ENCODE measurements at regions of chr5 and their contacts with region 1.

Region 1: GRCh38 chr5:80083101-80083890 is 48.1 kb downstream of the THBS4 start:
- DNase-seq: peak; percentile 71
- ATAC-seq: peak; percentile 73
- H3K4me3 ChIP-seq: peak overlapping the region in 4 of 5 experiments; percentile 7 to 43 (median 28)
- H3K4me3 Mint-ChIP-seq: peak overlapping the region; percentile 60
- H3K27ac ChIP-seq: no peak overlapping the region
- H3K27ac Mint-ChIP-seq: no peak overlapping the region
- H3K4me1 ChIP-seq: peaks cover 3 to 11% of the 10 kb centered on the region in 2 donors
- H3K4me1 Mint-ChIP-seq: peaks cover 9% of the 10 kb centered on the region
- H3K27me3 ChIP-seq: no peaks in the 10 kb centered on the region
- H3K27me3 Mint-ChIP-seq: no peaks in the 10 kb centered on the region
- CTCF ChIP-seq: peak; percentile 79

Region 2: GRCh38 chr5:79573983-79574890 is 509.1 kb before region 1 on chr5:
- CTCF ChIA-PET with region 1: no interaction called
- POLR2A ChIA-PET with region 1: no interaction called
- intact Hi-C with region 1: no loop called
- DNase-seq: no peak
- ATAC-seq: no peak
- H3K4me3 ChIP-seq: no peak overlapping the region
- H3K4me3 Mint-ChIP-seq: no peak overlapping the region
- H3K27ac ChIP-seq: no peak overlapping the region
- H3K27ac Mint-ChIP-seq: no peak overlapping the region
- H3K4me1 ChIP-seq: no peaks in the 10 kb centered on the region
- H3K4me1 Mint-ChIP-seq: no peaks in the 10 kb centered on the region
- H3K27me3 ChIP-seq: no peaks in the 10 kb centered on the region
- H3K27me3 Mint-ChIP-seq: peaks cover 17% of the 10 kb centered on the region
- CTCF ChIP-seq: no peak

Region 3: DNA sequence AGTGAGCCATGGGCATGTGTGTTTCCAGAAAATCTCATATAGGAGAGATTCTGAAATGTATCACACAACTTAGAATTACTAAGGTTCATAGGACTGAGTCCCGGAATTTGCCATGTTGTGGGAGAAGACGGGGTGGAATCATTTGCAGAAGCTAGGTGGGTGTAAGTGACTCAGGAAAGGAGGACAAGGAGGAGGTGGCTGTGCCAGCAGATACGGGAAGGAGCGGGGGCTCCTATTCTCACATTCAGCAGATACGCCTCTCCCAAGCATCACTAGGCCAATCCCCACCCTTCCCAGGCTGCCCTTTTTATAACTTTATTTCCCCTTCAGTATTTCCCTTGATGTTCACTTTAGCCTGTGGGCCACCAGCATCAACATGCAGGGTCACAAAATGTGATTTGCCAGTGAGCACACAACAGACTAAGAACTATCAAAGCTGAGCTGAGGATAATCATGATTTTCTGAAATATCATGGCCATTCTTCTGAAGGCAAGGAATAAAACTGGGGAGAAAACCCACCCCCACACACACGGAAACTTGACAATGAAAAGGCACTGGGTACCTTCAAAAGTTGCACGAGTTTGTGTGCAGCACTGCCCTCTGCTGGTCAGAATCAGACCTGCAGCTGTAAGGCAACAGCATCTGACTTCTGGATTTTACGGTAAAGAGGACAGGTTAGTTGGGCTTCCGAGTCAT is 225.4 kb before region 1 on chr5:
- CTCF ChIA-PET with region 1: interaction called, 10 read pairs
- POLR2A ChIA-PET with region 1: no interaction called
- intact Hi-C with region 1: no loop called
- DNase-seq: peak; percentile 70
- ATAC-seq: peak; percentile 69
- H3K4me3 ChIP-seq: no peak overlapping the region
- H3K4me3 Mint-ChIP-seq: no peak overlapping the region
- H3K27ac ChIP-seq: no peak overlapping the region
- H3K27ac Mint-ChIP-seq: no peak overlapping the region
- H3K4me1 ChIP-seq: no peaks in the 10 kb centered on the region
- H3K4me1 Mint-ChIP-seq: no peaks in the 10 kb centered on the region
- H3K27me3 ChIP-seq: peaks cover 0 to 5% (median 0%) of the 10 kb centered on the region in 4 experiments
- H3K27me3 Mint-ChIP-seq: peaks cover 6% of the 10 kb centered on the region
- CTCF ChIP-seq: peak; percentile 95

Region 4: DNA sequence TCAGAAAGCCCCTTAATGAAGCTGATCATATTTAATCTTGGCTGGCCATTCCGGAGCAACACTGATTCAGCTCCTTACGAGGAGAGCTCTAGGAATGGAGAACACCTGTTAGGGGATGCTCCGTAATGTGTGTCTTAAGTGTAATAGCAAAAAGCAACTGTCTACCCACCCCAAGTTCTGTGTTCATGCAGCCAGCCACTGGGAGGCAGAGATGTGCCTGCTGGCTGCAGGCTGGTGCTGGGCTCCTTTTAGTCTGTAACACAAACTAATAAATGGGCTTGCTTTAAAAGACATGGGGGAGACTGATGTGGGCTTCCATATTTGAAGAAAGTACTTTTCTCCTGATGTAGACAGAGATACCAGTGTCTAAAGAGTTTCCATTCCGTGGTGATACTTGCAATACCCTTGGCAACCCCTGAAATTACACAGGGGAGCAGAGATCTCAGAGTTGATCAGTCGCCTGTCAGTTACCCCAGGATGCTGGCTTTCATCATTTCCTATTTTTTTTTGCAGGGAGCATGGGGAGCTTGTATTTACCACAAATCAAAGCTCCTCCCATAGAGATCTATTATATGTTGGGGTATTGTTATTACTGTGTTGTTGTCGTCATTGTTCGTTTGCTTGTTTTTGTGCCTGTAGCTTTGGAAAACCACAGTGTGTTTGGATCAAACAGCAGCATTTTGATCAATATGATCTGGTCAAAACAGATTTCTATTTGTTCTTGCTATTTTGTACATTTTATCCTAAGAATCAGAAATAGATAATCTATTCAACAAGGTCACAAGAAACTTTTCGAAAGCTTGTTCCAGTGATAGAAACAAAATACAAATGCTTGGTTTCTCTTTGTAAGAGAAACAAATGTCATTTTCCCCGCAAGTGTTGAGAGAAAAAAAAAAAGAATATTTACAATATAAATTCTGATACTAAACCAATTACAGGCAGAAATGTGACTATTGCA is 158.1 kb before region 1 on chr5:
- CTCF ChIA-PET with region 1: interaction called, 5 read pairs
- POLR2A ChIA-PET with region 1: no interaction called
- intact Hi-C with region 1: loop called (anchors 5 kb)
- DNase-seq: no peak
- ATAC-seq: no peak
- H3K4me3 ChIP-seq: no peak overlapping the region
- H3K4me3 Mint-ChIP-seq: no peak overlapping the region
- H3K27ac ChIP-seq: no peak overlapping the region
- H3K27ac Mint-ChIP-seq: no peak overlapping the region
- H3K4me1 ChIP-seq: no peaks in the 10 kb centered on the region
- H3K4me1 Mint-ChIP-seq: no peaks in the 10 kb centered on the region
- H3K27me3 ChIP-seq: no peaks in the 10 kb centered on the region
- H3K27me3 Mint-ChIP-seq: peaks cover 16% of the 10 kb centered on the region
- CTCF ChIP-seq: no peak

Region 5: DNA sequence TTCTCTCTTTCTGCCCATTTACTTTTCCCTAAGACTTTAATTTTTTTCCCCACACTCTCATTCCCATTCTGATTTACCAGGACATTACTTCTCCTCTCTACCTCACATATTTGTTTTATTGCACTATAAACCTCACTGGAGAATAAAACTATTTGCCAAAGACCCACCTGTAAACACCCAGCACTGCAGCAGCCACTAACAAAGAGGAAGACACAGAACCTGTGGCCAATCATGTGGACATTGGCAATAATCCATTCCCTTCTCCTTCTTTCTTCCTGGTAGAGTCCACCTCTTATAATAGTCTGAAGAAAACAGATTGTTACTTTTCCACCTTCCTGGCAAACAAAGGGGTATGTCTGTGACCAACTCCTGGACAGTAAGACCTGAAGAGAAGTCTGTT is 56.5 kb before region 1 on chr5:
- CTCF ChIA-PET with region 1: no interaction called
- POLR2A ChIA-PET with region 1: no interaction called
- intact Hi-C with region 1: no loop called
- DNase-seq: no peak
- ATAC-seq: no peak
- H3K4me3 ChIP-seq: no peak overlapping the region
- H3K4me3 Mint-ChIP-seq: no peak overlapping the region
- H3K27ac ChIP-seq: no peak overlapping the region
- H3K27ac Mint-ChIP-seq: no peak overlapping the region
- H3K4me1 ChIP-seq: no peaks in the 10 kb centered on the region
- H3K4me1 Mint-ChIP-seq: no peaks in the 10 kb centered on the region
- H3K27me3 ChIP-seq: peaks cover 0 to 9% (median 0%) of the 10 kb centered on the region in 4 experiments
- H3K27me3 Mint-ChIP-seq: peaks cover 25% of the 10 kb centered on the region
- CTCF ChIP-seq: no peak

Region 6: DNA sequence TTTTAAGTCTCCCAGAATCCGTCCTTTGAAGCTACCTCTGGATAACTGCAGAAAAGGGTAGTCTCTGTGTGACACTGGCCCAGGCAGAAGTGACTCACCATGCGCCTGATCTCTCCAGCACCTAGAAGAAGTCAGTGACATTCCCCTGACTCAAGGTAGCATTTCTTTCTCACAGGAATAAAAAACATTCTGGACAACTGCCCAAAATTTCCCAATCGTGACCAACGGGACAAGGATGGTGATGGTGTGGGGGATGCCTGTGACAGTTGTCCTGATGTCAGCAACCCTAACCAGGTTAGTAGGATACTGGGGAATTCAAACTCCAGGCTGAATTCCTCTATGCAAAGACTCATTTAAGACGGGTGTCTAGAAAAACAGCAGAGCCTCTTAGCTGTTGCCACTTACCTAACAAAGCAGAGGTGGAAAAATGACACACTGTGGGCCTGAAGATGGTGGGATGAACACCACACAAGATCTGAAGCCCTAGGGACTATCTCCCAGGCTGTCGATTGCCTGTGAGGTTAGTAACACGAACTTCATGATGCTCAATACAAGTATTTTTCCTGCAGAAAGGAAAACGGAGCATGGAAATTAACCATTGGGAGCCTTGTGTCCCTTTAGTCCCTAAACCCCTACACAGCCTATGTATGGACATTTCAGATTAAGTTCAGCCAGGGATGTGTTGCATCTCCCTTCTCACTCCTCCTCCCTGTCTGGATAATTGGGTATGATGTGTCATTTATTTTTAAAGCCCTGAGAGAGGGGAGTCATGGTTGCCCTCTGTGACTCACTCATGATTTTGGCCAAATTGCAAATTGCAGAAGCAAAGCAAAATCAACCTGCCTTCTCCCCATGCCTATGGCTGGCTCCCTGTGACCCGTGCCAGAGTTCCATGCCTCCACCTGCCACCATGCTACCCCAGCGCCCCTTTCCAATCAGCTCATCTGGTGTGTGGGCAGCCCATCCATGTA is 10.9 kb before region 1 on chr5:
- CTCF ChIA-PET with region 1: interaction called, 15 read pairs
- POLR2A ChIA-PET with region 1: no interaction called
- intact Hi-C with region 1: no loop called
- DNase-seq: no peak
- ATAC-seq: no peak
- H3K4me3 ChIP-seq: no peak overlapping the region
- H3K4me3 Mint-ChIP-seq: no peak overlapping the region
- H3K27ac ChIP-seq: no peak overlapping the region
- H3K27ac Mint-ChIP-seq: no peak overlapping the region
- H3K4me1 ChIP-seq: peaks cover 8 to 13% of the 10 kb centered on the region in 2 donors
- H3K4me1 Mint-ChIP-seq: peaks cover 16% of the 10 kb centered on the region
- H3K27me3 ChIP-seq: no peaks in the 10 kb centered on the region
- H3K27me3 Mint-ChIP-seq: no peaks in the 10 kb centered on the region
- CTCF ChIP-seq: no peak

Region 7: GRCh38 chr5:80093796-80094195 is 10.5 kb after region 1 on chr5:
- CTCF ChIA-PET with region 1: interaction called, 24 read pairs
- POLR2A ChIA-PET with region 1: no interaction called
- intact Hi-C with region 1: loop called (anchors 1 kb)
- DNase-seq: no peak
- ATAC-seq: no peak
- H3K4me3 ChIP-seq: no peak overlapping the region
- H3K4me3 Mint-ChIP-seq: no peak overlapping the region
- H3K27ac ChIP-seq: no peak overlapping the region
- H3K27ac Mint-ChIP-seq: no peak overlapping the region
- H3K4me1 ChIP-seq: no peaks in the 10 kb centered on the region
- H3K4me1 Mint-ChIP-seq: no peaks in the 10 kb centered on the region
- H3K27me3 ChIP-seq: no peaks in the 10 kb centered on the region
- H3K27me3 Mint-ChIP-seq: no peaks in the 10 kb centered on the region
- CTCF ChIP-seq: no peak

Region 8: DNA sequence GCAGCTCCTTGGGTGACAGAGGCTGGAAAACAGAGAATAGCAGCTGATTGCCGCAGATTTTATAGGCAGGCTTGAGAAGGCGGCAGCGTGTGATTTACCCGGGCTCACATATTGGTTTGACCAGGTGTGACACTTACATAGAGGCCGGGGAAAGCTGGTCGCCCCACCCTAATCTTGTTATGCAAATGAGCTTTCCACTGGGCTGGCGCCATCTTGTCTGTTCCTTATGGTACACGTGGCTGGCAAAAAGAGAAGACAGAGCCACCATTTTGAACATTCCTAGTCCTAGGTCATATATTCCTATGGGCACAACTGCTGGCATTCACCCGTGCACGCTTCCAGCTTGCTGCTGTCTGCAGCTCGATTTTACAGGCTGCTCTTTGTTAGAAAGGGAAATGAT is 225.2 kb after region 1 on chr5:
- CTCF ChIA-PET with region 1: interaction called, 388 read pairs
- POLR2A ChIA-PET with region 1: interaction called, 4 read pairs
- intact Hi-C with region 1: no loop called
- DNase-seq: no peak
- ATAC-seq: no peak
- H3K4me3 ChIP-seq: no peak overlapping the region
- H3K4me3 Mint-ChIP-seq: no peak overlapping the region
- H3K27ac ChIP-seq: no peak overlapping the region
- H3K27ac Mint-ChIP-seq: no peak overlapping the region
- H3K4me1 ChIP-seq: no peaks in the 10 kb centered on the region
- H3K4me1 Mint-ChIP-seq: no peaks in the 10 kb centered on the region
- H3K27me3 ChIP-seq: no peaks in the 10 kb centered on the region
- H3K27me3 Mint-ChIP-seq: no peaks in the 10 kb centered on the region
- CTCF ChIP-seq: no peak

Region 9: GRCh38 chr5:80487829-80488721 is 404.8 kb after region 1 on chr5 and contains the start of gene FAM151B:
- CTCF ChIA-PET with region 1: no interaction called
- POLR2A ChIA-PET with region 1: no interaction called
- intact Hi-C with region 1: no loop called
- DNase-seq: peak; percentile 72
- ATAC-seq: peak; percentile 80
- H3K4me3 ChIP-seq: peak within 1 kb of the TSS; percentile 35 to 60 (median 50)
- H3K4me3 Mint-ChIP-seq: peak within 1 kb of the TSS; percentile 85
- H3K27ac ChIP-seq: no peak within 1 kb of the TSS
- H3K27ac Mint-ChIP-seq: no peak within 1 kb of the TSS
- H3K4me1 ChIP-seq: peaks cover 8 to 12% of the 10 kb centered on the region in 2 donors
- H3K4me1 Mint-ChIP-seq: peaks cover 18% of the 10 kb centered on the region
- H3K27me3 ChIP-seq: peaks cover 0 to 22% (median 8%) of the 10 kb centered on the region in 4 experiments
- H3K27me3 Mint-ChIP-seq: peaks cover 33% of the 10 kb centered on the region
- CTCF ChIP-seq: no peak
- total RNA-seq, gene FAM151B: 1.1 TPM in 1 of 2 replicates, not detected in the other

Measured in B cell (primary cell).